GM18951 (cell line): ENCODE measurements at regions of chr15 and their contacts with region 1.

Region 1: DNA sequence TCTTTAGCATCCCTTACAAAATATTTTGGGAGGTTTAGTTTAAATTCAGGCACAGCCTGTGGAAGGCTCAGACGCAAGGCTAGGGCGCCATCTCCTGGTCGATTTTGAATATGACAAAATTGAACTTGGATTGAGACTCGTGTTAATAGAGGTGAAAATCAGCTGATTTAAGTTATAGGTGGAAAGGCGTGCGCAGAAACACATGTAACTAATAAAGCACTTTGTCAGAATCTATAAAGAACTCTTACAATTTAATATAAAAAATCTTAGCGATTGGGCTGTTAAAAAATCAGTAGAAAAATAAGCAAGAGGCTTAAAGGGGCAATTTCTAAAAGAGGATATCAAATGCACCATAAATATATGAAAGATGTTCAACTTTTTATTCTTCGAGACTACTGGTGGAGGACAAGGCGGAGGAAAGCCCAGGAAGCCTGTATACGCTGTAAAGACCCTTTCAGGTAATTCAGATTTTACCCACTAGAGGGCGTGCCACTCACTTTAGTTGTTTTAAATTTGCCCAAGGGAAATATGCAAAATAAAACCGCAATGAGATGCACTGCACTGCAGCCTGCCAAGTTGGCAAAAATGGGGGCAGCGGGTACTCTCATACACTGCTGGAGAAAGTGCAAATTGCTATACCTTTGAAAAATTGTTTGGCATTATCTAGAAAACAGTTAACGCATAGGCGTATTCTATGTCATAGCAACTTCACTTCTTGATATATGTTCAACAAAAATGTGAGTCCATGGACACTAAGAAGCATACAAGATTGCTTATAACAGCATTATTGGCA is 64.7 kb downstream of the SLC30A4 start:
- POLR2A ChIP-seq: no peak

Region 2: GRCh38 chr15:45611305-45611704 is 153.5 kb after region 1 on chr15:
- in situ Hi-C with region 1: loop called (anchors 5 kb)
- POLR2A ChIP-seq: no peak